ENCODE measurements at regions of chr20 and their contacts with region 1.

Region 1: GRCh38 chr20:44609511-44610312 is 27.3 kb downstream of the PKIG start:
- DNase-seq: peak; percentile 87 to 94 (median 92)
- H3K4me3 ChIP-seq: peak overlapping the region; percentile 17
- H3K27ac ChIP-seq: peak overlapping the region; percentile 73 to 79
- H3K4me1 ChIP-seq: peaks cover 5% of the 10 kb centered on the region
- H3K27me3 ChIP-seq: no peaks in the 10 kb centered on the region
- CTCF ChIP-seq: peak; percentile 93 to 98 (median 94)
- EP300 ChIP-seq: no peak
- POLR2A ChIP-seq: no peak

Region 2: DNA sequence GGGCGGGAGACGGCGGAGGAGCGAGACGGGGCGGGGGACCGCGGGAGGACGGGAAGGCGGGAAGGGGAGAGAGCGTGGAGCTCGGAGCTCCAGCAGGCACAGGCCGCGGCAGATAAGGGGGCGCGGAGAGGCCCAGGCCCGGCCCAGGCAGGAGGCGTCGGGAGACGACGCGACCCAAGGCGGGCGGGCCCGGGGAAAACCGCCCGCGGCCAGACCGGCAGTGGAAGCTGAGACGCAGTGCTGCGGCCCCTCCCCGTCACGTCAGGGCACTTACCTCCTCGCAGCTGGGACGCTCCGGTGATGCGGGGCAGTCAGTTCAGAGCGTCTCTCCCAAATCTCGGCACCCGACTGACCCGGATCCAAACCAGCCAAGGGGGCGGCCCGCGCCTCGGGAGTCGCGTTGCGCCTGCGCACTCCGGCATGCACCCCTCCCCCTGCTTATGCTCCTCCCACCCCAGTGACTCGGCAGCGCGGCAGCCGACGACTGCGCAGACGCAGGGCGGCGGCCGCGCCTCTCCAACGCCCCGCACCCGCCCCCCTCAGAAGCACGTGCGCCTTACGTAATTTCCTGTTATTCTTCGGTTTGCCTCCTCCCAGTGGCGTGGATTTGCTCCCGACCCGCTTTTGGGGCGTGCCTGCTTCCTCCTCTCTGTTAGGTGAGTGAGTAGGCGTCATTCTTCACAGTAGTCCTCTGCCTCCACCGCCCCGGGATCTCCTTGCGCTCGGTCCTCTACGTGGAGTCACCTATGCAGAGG is 399.1 kb before region 1 on chr20 and contains the start of gene OSER1:
- intact Hi-C with region 1: loop called in 2 of 4 experiments (anchors 10 kb)
- DNase-seq: peak; percentile 96 to 99 (median 98)
- H3K4me3 ChIP-seq: peak within 1 kb of the TSS; percentile 70
- H3K27ac ChIP-seq: peak within 1 kb of the TSS; percentile 86 to 98
- H3K4me1 ChIP-seq: peaks cover 1% of the 10 kb centered on the region
- H3K27me3 ChIP-seq: no peaks in the 10 kb centered on the region
- CTCF ChIP-seq: peak in 1 of 3 donors; percentile 5
- EP300 ChIP-seq: peak; percentile 88
- POLR2A ChIP-seq: peak; percentile 92
- total RNA-seq, gene OSER1: 27.7 to 40.1 (median 37.2) TPM

Region 3: DNA sequence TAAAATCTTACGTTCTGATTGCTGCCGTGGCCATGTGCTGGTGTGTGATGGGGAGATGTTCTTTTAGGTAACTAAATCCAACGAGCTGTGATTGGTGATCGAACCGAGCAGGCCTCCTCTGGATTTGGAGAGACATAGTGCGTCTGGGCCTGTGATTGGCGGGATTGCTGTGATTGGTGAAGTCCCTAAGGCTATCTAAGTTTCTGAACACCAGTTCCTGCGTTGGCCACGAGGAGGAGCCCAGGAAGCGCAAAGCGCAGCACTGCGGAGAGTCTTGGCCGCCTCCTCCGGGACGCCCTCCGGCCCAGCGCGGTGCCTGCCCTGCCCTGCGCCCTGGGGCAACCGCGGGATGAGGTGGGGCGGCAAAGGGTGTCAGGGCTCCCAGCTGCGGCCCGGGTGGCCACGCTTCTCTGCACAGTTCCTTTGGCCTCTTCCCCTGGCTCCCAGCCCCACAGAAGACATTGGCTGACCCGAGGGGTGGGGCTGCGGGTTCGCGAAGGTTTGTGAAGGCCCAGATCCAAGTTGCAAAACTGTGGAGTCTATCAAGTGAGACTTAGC is 221.2 kb before region 1 on chr20:
- intact Hi-C with region 1: loop called (anchors 5 to 10 kb)
- DNase-seq: peak; percentile 54 to 82 (median 69)
- H3K4me3 ChIP-seq: no peak overlapping the region
- H3K27ac ChIP-seq: no peak overlapping the region
- H3K4me1 ChIP-seq: peaks cover 13% of the 10 kb centered on the region
- H3K27me3 ChIP-seq: no peaks in the 10 kb centered on the region
- CTCF ChIP-seq: peak; percentile 45 to 75 (median 56)
- EP300 ChIP-seq: no peak
- POLR2A ChIP-seq: no peak

Region 4: DNA sequence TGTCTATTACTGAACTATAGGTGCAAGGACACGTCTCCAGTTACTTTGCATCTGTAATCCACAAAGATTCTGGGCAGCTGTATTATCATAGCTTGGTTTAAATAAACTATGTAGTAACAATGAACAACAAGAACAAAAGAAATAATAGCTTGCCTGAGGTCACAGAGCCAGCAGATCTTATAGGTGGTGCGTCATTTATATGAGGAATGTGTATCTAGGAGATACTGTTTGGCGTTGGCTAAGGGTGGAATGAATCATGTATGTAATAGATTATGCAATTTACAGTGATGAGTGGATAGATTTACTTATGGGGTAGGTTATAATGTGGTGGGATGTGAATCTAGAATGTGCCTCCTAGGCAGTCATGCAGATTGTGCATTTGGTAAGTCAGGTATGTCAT is 211.4 kb before region 1 on chr20:
- intact Hi-C with region 1: loop called in 1 of 4 experiments (anchors 10 kb)
- DNase-seq: no peak
- H3K4me3 ChIP-seq: no peak overlapping the region
- H3K27ac ChIP-seq: no peak overlapping the region
- H3K4me1 ChIP-seq: peaks cover 8% of the 10 kb centered on the region
- H3K27me3 ChIP-seq: no peaks in the 10 kb centered on the region
- CTCF ChIP-seq: no peak
- EP300 ChIP-seq: no peak
- POLR2A ChIP-seq: no peak

Region 5: DNA sequence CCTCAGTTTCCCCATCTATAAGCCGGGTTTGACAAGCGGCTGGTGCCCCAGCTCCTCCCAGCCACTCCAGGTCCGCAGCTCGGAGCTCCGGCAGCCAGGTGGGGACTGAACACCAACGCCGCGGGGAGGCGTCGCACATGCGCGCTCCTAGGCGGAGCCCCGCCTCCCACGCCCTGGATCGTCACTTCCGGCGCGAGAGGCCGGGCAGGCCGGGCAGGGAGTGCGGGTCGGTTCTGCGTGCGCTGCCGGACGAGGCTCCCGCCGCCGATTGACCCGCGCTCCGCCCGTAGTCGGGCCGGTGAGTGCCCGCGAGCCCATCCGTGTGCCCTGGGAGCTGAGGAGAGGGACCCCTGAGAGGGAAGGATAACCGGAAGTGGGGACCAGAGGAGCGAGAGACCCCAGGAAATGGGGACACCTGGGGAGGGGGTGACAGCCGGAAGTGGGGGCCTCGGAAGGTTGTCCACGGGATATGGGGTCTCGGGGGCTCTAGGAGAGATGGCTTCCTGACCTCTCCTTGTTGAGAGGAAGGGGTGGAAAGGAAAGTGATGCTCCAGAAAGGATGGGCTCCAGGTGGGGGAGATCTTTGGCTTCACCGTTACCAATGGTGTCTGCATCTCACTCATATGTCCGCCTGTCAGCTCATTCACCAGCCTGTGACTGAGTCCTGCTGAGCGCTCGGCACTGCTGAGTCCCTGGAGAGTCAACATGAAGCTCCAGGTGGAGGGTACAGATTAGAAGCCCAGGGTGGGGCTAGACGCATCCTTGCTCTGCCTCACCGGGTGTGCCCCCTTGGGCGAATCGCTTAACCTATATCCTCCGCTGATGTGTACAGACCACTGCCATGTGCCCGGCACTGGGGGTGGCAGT is 133.8 kb before region 1 on chr20 and contains the start of gene TTPAL:
- intact Hi-C with region 1: loop called (anchors 1 to 10 kb)
- DNase-seq: peak; percentile 89 to 95 (median 92)
- H3K4me3 ChIP-seq: peak within 1 kb of the TSS; percentile 50
- H3K27ac ChIP-seq: peak within 1 kb of the TSS; percentile 80 to 91
- H3K4me1 ChIP-seq: peaks cover 6% of the 10 kb centered on the region
- H3K27me3 ChIP-seq: no peaks in the 10 kb centered on the region
- CTCF ChIP-seq: peak; percentile 27 to 68 (median 56)
- EP300 ChIP-seq: no peak
- POLR2A ChIP-seq: peak; percentile 100
- total RNA-seq, gene TTPAL: 5.6 to 25.1 (median 12.4) TPM

Region 6: GRCh38 chr20:44532259-44532980 is 77.3 kb before region 1 on chr20:
- intact Hi-C with region 1: loop called in 3 of 4 experiments (anchors 5 kb)
- DNase-seq: peak in 4 of 5 donors; percentile 28 to 54 (median 40)
- H3K4me3 ChIP-seq: peak overlapping the region; percentile 80
- H3K27ac ChIP-seq: peak overlapping the region in 1 of 2 donors; percentile 50
- H3K4me1 ChIP-seq: peaks cover 5% of the 10 kb centered on the region
- H3K27me3 ChIP-seq: no peaks in the 10 kb centered on the region
- CTCF ChIP-seq: no peak
- EP300 ChIP-seq: no peak
- POLR2A ChIP-seq: no peak

Region 7: DNA sequence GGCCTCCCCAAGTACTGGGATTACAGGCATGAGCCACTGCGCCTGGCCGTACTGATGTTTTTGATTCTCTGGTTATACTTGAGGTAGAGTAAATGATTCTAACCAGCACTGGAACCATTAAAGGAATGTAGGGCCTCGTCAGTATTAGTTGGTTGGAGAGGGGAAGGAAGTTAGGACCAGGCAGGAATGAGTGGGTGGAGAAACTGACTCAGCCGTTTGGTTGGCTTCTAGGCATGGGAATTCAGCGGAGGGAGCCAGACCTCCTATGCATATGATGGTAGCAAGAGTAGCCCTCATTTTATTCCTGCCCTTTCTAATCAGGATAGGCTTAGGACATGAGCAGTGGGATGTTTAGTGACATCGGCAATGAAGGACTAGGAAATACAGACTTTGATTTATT is 68.9 kb before region 1 on chr20:
- intact Hi-C with region 1: loop called in 1 of 4 experiments (anchors 10 kb)
- DNase-seq: no peak
- H3K4me3 ChIP-seq: no peak overlapping the region
- H3K27ac ChIP-seq: no peak overlapping the region
- H3K4me1 ChIP-seq: peaks cover 2% of the 10 kb centered on the region
- H3K27me3 ChIP-seq: no peaks in the 10 kb centered on the region
- CTCF ChIP-seq: no peak
- EP300 ChIP-seq: no peak
- POLR2A ChIP-seq: no peak

Region 8: DNA sequence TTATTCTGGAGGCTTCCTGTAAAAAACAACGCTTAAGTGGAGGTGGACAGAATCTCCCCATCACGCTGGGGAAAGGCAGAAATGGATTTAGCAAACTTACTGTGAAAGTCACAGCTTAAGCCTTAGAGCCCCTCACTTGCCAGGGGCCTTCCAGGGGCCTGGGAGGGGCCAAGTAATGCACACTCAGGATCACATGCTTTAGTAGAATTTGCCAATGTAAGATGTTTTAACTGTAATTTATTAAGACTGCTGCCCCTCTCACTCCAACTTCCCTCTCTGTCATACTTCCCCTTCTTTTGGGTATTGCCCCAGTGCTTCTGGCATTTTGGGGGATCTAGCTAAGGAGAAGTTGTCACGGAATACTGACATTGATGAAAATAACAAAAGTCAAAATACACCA is 54.4 kb after region 1 on chr20:
- intact Hi-C with region 1: no loop called
- DNase-seq: no peak
- H3K4me3 ChIP-seq: no peak overlapping the region
- H3K27ac ChIP-seq: no peak overlapping the region
- H3K4me1 ChIP-seq: no peaks in the 10 kb centered on the region
- H3K27me3 ChIP-seq: no peaks in the 10 kb centered on the region
- CTCF ChIP-seq: no peak
- EP300 ChIP-seq: no peak
- POLR2A ChIP-seq: no peak